Natural killer cell (primary cell): ENCODE measurements at regions of chr13 and their contacts with region 1.

Region 1: GRCh38 chr13:42392716-42393572 is 121.0 kb downstream of the AKAP11 start:
- DNase-seq: peak in 1 of 2 donors; percentile 69
- ATAC-seq: peak; percentile 74 to 76 (median 75)
- H3K4me3 ChIP-seq: no peak overlapping the region
- H3K4me3 Mint-ChIP-seq: peak overlapping the region; percentile 77
- H3K27ac ChIP-seq: peak overlapping the region; percentile 75
- H3K27ac Mint-ChIP-seq: peak overlapping the region; percentile 88 to 90
- H3K4me1 ChIP-seq: peaks cover 50% of the 10 kb centered on the region
- H3K4me1 Mint-ChIP-seq: peaks cover 60 to 67% of the 10 kb centered on the region in 2 donors
- H3K27me3 ChIP-seq: no peaks in the 10 kb centered on the region
- H3K27me3 Mint-ChIP-seq: peaks cover 0 to 3% of the 10 kb centered on the region in 2 donors
- CTCF ChIP-seq: no peak

Region 2: DNA sequence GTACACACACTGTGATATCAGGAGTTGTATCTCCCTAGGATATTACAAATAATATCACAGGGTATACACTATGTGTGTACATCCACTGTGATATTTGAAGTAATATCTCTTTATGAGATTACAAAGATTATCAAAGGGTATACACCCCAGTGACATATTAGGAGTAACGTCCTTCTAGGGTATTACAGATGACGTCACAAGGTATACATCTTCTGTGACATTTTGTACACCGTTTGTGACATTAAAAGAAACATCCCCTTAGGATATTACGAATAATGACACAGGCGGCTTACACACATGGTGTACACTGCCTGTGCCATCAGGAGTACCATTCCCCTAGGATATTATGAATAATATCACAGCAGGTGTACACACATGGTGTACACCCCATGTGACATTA is 949.0 kb before region 1 on chr13:
- intact Hi-C with region 1: no loop called
- DNase-seq: no peak
- ATAC-seq: no peak
- H3K4me3 ChIP-seq: no peak overlapping the region
- H3K4me3 Mint-ChIP-seq: no peak overlapping the region
- H3K27ac ChIP-seq: no peak overlapping the region
- H3K27ac Mint-ChIP-seq: no peak overlapping the region
- H3K4me1 ChIP-seq: no peaks in the 10 kb centered on the region
- H3K4me1 Mint-ChIP-seq: no peaks in the 10 kb centered on the region
- H3K27me3 ChIP-seq: no peaks in the 10 kb centered on the region
- H3K27me3 Mint-ChIP-seq: no peaks in the 10 kb centered on the region
- CTCF ChIP-seq: no peak

Region 3: GRCh38 chr13:42271337-42272114 is 121.4 kb before region 1 on chr13:
- intact Hi-C with region 1: loop called (anchors 2 kb)
- DNase-seq: peak; percentile 86 to 98
- ATAC-seq: peak; percentile 84 to 93 (median 90)
- H3K4me3 ChIP-seq: peak overlapping the region; percentile 75
- H3K4me3 Mint-ChIP-seq: peak overlapping the region; percentile 98
- H3K27ac ChIP-seq: peak overlapping the region; percentile 94
- H3K27ac Mint-ChIP-seq: peak overlapping the region; percentile 95
- H3K4me1 ChIP-seq: peaks cover 9% of the 10 kb centered on the region
- H3K4me1 Mint-ChIP-seq: peaks cover 43 to 48% of the 10 kb centered on the region in 2 donors
- H3K27me3 ChIP-seq: no peaks in the 10 kb centered on the region
- H3K27me3 Mint-ChIP-seq: peaks cover 8 to 9% of the 10 kb centered on the region in 2 donors
- CTCF ChIP-seq: no peak

Region 4: DNA sequence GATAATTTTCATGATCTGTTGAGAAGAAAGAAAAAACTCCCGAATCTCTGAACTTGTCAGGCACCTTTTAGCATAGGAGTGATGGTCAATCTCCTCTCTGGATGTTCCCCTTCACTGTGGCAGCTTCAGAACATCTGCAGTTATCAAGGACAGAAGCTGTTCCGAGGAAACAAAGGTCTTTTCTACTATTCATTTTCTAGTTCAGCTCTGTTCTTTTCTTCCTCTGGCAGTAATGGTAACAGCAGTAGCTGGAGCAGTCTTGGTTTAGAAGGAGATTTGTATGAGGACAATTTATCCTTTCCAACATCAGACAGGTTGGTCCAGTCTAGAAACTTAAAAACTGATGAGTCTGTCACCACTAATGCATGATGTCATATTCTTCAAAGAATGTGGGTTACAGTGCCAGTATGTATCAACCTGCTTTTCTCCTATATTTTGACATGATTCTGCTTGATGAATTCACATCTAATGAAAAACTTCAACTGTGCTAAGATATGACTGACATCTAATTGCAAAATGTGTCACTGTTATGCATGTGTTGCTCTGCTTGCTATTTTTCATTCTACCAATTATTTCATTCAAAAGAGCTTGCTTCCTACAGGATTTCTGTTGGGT is 80.0 kb before region 1 on chr13:
- intact Hi-C with region 1: no loop called
- DNase-seq: no peak
- ATAC-seq: no peak
- H3K4me3 ChIP-seq: no peak overlapping the region
- H3K4me3 Mint-ChIP-seq: no peak overlapping the region
- H3K27ac ChIP-seq: no peak overlapping the region
- H3K27ac Mint-ChIP-seq: no peak overlapping the region
- H3K4me1 ChIP-seq: no peaks in the 10 kb centered on the region
- H3K4me1 Mint-ChIP-seq: peaks cover 0 to 19% of the 10 kb centered on the region in 2 donors
- H3K27me3 ChIP-seq: no peaks in the 10 kb centered on the region
- H3K27me3 Mint-ChIP-seq: no peaks in the 10 kb centered on the region
- CTCF ChIP-seq: no peak

Region 5: GRCh38 chr13:42574435-42575311 is 181.7 kb after region 1 on chr13:
- intact Hi-C with region 1: loop called (anchors 5 kb)
- DNase-seq: peak; percentile 28 to 39
- ATAC-seq: peak; percentile 55 to 70 (median 68)
- H3K4me3 ChIP-seq: peak overlapping the region; percentile 21
- H3K4me3 Mint-ChIP-seq: peak overlapping the region; percentile 80
- H3K27ac ChIP-seq: no peak overlapping the region
- H3K27ac Mint-ChIP-seq: peak overlapping the region; percentile 1 to 71
- H3K4me1 ChIP-seq: peaks cover 19% of the 10 kb centered on the region
- H3K4me1 Mint-ChIP-seq: peaks cover 45% of the 10 kb centered on the region in 2 donors
- H3K27me3 ChIP-seq: no peaks in the 10 kb centered on the region
- H3K27me3 Mint-ChIP-seq: peaks cover 7 to 8% of the 10 kb centered on the region in 2 donors
- CTCF ChIP-seq: no peak